ENCODE measurements at regions of chr1 and their contacts with region 1.

Region 1: GRCh38 chr1:63674238-63674864 is 81.1 kb downstream of the PGM1 start:
- DNase-seq: peak; percentile 80 to 84
- ATAC-seq: peak; percentile 99
- H3K4me3 ChIP-seq: no peak overlapping the region
- H3K27ac ChIP-seq: peak overlapping the region; percentile 81 to 86
- H3K4me1 ChIP-seq: peaks cover 17% of the 10 kb centered on the region
- CTCF ChIP-seq: peak; percentile 76
- EP300 ChIP-seq: no peak
- POLR2A ChIP-seq: no peak
- RAD21 ChIP-seq: peak; percentile 91 to 93

Region 2: DNA sequence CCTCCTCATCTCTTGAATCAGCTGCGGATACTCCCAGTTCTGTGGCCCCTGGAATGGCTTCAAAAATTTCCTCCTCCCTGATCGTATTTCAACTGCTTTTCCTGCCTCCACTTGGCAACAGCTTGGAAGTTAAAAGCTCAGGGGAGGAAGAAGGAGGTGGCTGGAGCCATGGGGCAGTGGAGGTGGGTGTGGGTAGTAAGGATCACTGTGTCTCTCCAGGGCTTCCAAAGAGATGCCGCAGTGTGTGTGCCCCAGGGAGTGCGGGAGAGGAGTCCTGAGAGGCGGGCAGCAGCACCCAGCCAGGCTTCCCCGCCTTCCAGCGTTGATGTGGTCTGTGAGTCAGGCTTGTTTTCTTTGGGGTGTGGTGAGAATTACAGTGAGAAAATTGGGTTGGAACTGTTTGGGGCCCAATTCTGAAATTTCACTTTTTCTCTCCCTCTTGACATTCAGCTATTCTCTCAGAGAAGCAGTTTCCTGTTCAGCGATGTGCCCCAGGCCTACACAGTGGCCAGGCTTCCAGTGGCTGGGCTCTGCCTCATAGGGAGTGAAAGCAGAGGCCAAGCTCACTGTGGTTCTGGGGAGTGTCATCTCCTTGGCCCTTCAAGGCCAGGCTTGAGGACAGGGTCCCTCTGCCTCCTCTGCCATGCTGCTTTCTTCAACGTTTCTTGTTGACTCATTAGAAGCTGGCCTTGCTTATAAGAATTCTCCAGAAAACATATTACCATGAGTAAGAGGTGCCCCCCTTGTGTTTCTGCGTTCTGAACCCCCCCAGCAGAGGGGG is 12.1 kb before region 1 on chr1:
- CTCF ChIA-PET with region 1: interaction called, 25 read pairs
- POLR2A ChIA-PET with region 1: no interaction called
- DNase-seq: peak; percentile 50 to 57
- ATAC-seq: peak; percentile 84 to 86
- H3K4me3 ChIP-seq: no peak overlapping the region
- H3K27ac ChIP-seq: peak overlapping the region; percentile 92 to 98
- H3K4me1 ChIP-seq: peaks cover 41% of the 10 kb centered on the region
- CTCF ChIP-seq: no peak
- EP300 ChIP-seq: no peak
- POLR2A ChIP-seq: no peak
- RAD21 ChIP-seq: no peak

Region 3: GRCh38 chr1:63721531-63722189 is 47.3 kb after region 1 on chr1:
- CTCF ChIA-PET with region 1: no interaction called
- POLR2A ChIA-PET with region 1: no interaction called
- DNase-seq: no peak
- ATAC-seq: peak in 1 of 2 experiments; percentile 48; a peak in 3 of 6 replicates
- H3K4me3 ChIP-seq: no peak overlapping the region
- H3K27ac ChIP-seq: peak overlapping the region; percentile 62 to 76
- H3K4me1 ChIP-seq: peaks cover 47% of the 10 kb centered on the region
- CTCF ChIP-seq: no peak
- EP300 ChIP-seq: peak in 1 of 2 experiments; percentile 25; a peak in 1 of 5 replicates
- POLR2A ChIP-seq: no peak
- RAD21 ChIP-seq: no peak

Measured in A549 (cell line).